ENCODE measurements at regions of chr10 and their contacts with region 1.

Region 1: GRCh38 chr10:68364101-68364886 is 31.6 kb upstream of the PBLD start:
- DNase-seq: no peak
- ATAC-seq: no peak
- H3K4me3 ChIP-seq: no peak overlapping the region
- H3K27ac ChIP-seq: no peak overlapping the region
- H3K4me1 ChIP-seq: no peaks in the 10 kb centered on the region
- H3K27me3 ChIP-seq: no peaks in the 10 kb centered on the region
- CTCF ChIP-seq: no peak
- POLR2A ChIP-seq: no peak
- RAD21 ChIP-seq: no peak

Region 2: GRCh38 chr10:67506082-67506756 is 858.1 kb before region 1 on chr10:
- CTCF ChIA-PET with region 1: no interaction called
- POLR2A ChIA-PET with region 1: no interaction called
- RAD21 ChIA-PET with region 1: no interaction called
- intact Hi-C with region 1: no loop called
- DNase-seq: no peak
- ATAC-seq: no peak
- H3K4me3 ChIP-seq: no peak overlapping the region
- H3K27ac ChIP-seq: no peak overlapping the region
- H3K4me1 ChIP-seq: no peaks in the 10 kb centered on the region
- H3K27me3 ChIP-seq: no peaks in the 10 kb centered on the region
- CTCF ChIP-seq: 0 out of 6 replicates have a peak, but pooled peaks of 1 of the 3 experiments have one; percentile 7
- POLR2A ChIP-seq: no peak
- RAD21 ChIP-seq: peak; percentile 42

Region 3: DNA sequence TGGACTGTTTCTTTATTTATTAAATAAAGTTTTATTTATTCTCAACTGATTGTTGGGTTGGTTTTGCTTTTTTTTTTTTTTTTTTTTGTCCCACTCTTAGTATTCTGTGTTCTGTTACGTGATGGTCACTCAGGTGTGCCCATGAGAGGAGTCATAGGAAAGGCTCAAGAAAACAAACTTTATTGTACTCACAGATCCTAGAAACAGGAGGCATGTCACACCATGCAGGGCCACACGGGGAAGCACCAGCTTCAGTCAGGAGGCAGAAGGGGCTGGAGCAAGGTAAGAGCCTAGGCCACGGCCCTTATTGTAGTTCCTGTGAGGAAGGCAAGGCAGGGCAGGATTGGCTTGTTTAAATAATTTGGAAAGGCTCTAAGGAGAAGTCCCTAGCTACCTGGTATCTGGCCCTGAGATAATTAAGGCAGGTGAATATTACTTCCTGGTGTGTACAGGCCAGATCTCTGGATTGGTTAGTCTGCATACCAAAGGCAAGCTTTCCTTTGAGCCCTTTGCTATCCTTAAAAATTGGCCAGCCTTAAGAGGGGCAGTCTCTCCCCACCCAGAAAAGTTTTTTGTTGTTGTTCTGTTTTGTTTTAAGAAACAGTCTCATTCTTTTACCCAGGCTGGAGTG is 140.6 kb before region 1 on chr10:
- CTCF ChIA-PET with region 1: no interaction called
- POLR2A ChIA-PET with region 1: no interaction called
- RAD21 ChIA-PET with region 1: no interaction called
- intact Hi-C with region 1: no loop called
- DNase-seq: no peak
- ATAC-seq: peak; percentile 94
- H3K4me3 ChIP-seq: no peak overlapping the region
- H3K27ac ChIP-seq: no peak overlapping the region
- H3K4me1 ChIP-seq: no peaks in the 10 kb centered on the region
- H3K27me3 ChIP-seq: no peaks in the 10 kb centered on the region
- CTCF ChIP-seq: peak; percentile 10 to 44 (median 36); a peak in 3 of 6 replicates
- POLR2A ChIP-seq: no peak
- RAD21 ChIP-seq: peak; percentile 27; the same call in 1 of the 2 replicates

Region 4: DNA sequence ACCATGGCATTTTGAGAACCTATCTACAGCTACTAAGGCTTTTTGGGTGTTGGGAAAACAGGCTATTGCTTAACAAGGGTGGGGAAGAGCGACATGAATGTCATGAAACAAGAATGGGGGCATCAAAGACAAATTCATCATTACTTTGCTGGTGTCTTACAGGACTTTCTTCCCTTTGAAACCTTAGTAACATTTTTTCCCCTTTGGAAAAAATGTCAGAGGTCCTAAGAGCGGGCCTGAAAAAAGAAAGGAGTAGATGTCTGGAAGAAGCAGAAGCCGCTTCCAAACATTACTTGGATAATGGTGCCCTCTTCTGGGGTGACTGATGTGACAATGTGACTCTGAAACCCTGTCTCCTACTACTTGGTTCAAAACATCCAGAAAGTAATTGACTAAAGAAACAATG is 533.0 kb after region 1 on chr10:
- CTCF ChIA-PET with region 1: no interaction called
- POLR2A ChIA-PET with region 1: no interaction called
- RAD21 ChIA-PET with region 1: no interaction called
- intact Hi-C with region 1: loop called (anchors 10 kb)
- DNase-seq: peak; percentile 48
- ATAC-seq: no peak
- H3K4me3 ChIP-seq: no peak overlapping the region
- H3K27ac ChIP-seq: no peak overlapping the region
- H3K4me1 ChIP-seq: peaks cover 0 to 12% of the 10 kb centered on the region in 2 experiments; a peak in 2 of 4 replicates
- H3K27me3 ChIP-seq: no peaks in the 10 kb centered on the region
- CTCF ChIP-seq: peak; percentile 30 to 68 (median 61); a peak in 5 of 6 replicates
- POLR2A ChIP-seq: no peak
- RAD21 ChIP-seq: peak; percentile 88